ENCODE measurements at regions of chr7 and their contacts with region 1.

Region 1: GRCh38 chr7:25069900-25070443 is 55.1 kb downstream of the CYCS start:
- DNase-seq: peak; percentile 43 to 57 (median 54)
- H3K4me3 ChIP-seq: no peak overlapping the region
- H3K4me3 Mint-ChIP-seq: no peak overlapping the region
- H3K27ac ChIP-seq: no peak overlapping the region
- H3K27ac Mint-ChIP-seq: peak overlapping the region in 2 of 7 donors; percentile 44 to 51
- H3K4me1 ChIP-seq: peaks cover 5% of the 10 kb centered on the region
- H3K4me1 Mint-ChIP-seq: peaks cover 0 to 7% (median 4%) of the 10 kb centered on the region in 4 donors
- H3K27me3 ChIP-seq: no peaks in the 10 kb centered on the region
- H3K27me3 Mint-ChIP-seq: no peaks in the 10 kb centered on the region

Region 2: DNA sequence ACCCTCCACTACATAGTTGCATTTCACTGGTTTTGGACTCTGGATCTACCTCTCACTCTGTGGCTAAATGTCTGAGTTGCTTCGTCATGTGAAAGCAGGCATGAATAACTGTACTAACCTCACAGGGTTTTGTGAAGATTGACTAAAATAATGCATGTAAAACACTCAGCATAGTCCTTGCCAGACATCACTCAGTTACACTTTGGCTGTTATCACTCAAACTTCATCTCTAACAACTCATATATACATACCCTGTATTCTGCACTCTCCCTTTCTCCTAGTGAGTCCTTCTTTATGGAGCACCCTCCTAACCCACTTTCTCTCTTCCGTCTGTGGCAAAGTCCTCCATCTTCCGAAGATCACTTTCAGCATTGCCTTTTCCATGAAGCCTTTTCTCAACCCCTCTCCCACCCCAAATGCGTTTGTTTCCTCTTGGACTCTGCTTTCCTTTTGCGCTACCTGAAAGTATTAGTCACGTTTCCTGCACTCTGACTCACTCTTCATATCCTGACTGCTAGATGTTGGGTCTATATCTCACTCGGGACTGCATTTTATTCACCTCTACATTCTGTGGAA is 162.6 kb before region 1 on chr7:
- CTCF ChIA-PET with region 1: interaction called, 5 read pairs
- POLR2A ChIA-PET with region 1: interaction called, 3 read pairs
- intact Hi-C with region 1: loop called (anchors 5 kb)
- DNase-seq: peak; percentile 16 to 76 (median 29)
- H3K4me3 ChIP-seq: peak overlapping the region; percentile 14 to 23
- H3K4me3 Mint-ChIP-seq: no peak overlapping the region
- H3K27ac ChIP-seq: peak overlapping the region; percentile 6
- H3K27ac Mint-ChIP-seq: no peak overlapping the region
- H3K4me1 ChIP-seq: peaks cover 88% of the 10 kb centered on the region
- H3K4me1 Mint-ChIP-seq: peaks cover 35 to 42% (median 38%) of the 10 kb centered on the region in 4 donors
- H3K27me3 ChIP-seq: no peaks in the 10 kb centered on the region
- H3K27me3 Mint-ChIP-seq: no peaks in the 10 kb centered on the region

Region 3: DNA sequence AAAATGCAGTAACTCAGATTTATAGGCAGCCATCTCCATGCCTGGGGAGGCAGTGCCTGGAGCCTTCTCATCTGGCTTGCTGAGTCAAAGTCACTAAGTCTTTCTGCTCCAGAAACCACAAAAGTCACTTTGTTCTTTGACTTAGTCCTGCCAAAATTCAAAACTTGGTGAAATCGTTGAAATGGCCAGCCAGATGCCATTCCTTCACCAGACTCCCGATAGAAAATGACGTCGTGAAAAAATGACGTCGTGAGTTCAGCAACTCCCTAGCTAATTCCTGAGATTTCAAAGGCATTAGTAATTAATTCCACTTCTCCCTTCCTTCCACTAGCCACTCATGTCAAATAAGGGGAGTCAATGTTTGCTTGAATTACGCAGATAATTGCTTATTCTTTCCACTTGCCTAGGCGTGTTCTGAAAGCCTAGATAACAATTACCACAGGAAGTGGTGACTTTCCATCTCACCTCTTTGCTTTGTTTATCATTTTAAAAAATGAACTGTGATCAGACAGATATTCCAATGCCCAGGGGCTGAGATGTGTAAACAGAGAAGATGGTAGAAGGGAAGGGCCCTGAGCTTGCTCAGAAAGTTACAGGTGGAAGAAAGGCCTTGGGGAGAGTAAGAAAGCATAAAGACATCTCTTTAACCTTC is 41.5 kb before region 1 on chr7:
- CTCF ChIA-PET with region 1: interaction called, 36 read pairs
- POLR2A ChIA-PET with region 1: interaction called, 11 read pairs
- intact Hi-C with region 1: loop called (anchors 1 kb)
- DNase-seq: peak; percentile 54 to 78 (median 71)
- H3K4me3 ChIP-seq: no peak overlapping the region
- H3K4me3 Mint-ChIP-seq: peak overlapping the region in 7 of 8 donors; percentile 61 to 92 (median 78)
- H3K27ac ChIP-seq: peak overlapping the region; percentile 53
- H3K27ac Mint-ChIP-seq: peak overlapping the region; percentile 67 to 97 (median 94)
- H3K4me1 ChIP-seq: peaks cover 55% of the 10 kb centered on the region
- H3K4me1 Mint-ChIP-seq: peaks cover 25 to 78% (median 62%) of the 10 kb centered on the region in 4 donors
- H3K27me3 ChIP-seq: no peaks in the 10 kb centered on the region
- H3K27me3 Mint-ChIP-seq: peaks cover 0 to 1% of the 10 kb centered on the region in 2 donors

Region 4: GRCh38 chr7:25050223-25050622 is 19.7 kb before region 1 on chr7:
- CTCF ChIA-PET with region 1: interaction called, 10 read pairs
- POLR2A ChIA-PET with region 1: no interaction called
- intact Hi-C with region 1: no loop called
- DNase-seq: no peak
- H3K4me3 ChIP-seq: no peak overlapping the region
- H3K4me3 Mint-ChIP-seq: no peak overlapping the region
- H3K27ac ChIP-seq: no peak overlapping the region
- H3K27ac Mint-ChIP-seq: no peak overlapping the region
- H3K4me1 ChIP-seq: no peaks in the 10 kb centered on the region
- H3K4me1 Mint-ChIP-seq: no peaks in the 10 kb centered on the region
- H3K27me3 ChIP-seq: no peaks in the 10 kb centered on the region
- H3K27me3 Mint-ChIP-seq: no peaks in the 10 kb centered on the region

Region 5: DNA sequence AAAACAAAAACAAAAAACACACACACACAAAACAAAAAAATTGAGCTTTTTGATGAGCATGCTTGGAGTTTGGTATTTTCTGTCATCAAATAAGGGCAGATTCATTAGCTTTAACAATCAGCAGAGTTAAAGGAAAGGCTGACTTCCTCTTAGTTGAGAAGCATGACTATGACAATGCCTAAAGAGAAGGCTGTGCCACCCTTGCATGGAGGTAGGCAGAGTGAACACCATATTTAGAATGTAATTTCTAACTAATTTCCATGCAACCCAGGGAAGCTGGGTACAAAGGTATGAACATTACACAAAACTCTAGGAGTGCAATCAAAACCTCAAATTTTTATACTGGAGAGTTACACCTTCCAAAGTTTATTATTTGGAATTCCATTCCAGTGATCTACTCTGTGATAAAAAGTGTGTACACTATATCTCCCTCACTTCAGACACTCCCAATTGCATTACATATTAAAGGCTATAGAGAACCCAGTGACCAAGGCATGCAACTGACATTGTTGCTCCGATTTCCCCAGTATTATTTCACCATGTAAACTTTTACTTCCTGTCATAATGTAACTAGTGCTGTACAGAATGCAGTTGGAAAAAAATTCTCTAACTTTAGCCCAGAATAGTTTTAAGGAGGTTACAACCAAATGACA is 64.5 kb after region 1 on chr7:
- CTCF ChIA-PET with region 1: no interaction called
- POLR2A ChIA-PET with region 1: no interaction called
- intact Hi-C with region 1: no loop called
- DNase-seq: no peak
- H3K4me3 ChIP-seq: no peak overlapping the region
- H3K4me3 Mint-ChIP-seq: no peak overlapping the region
- H3K27ac ChIP-seq: no peak overlapping the region
- H3K27ac Mint-ChIP-seq: no peak overlapping the region
- H3K4me1 ChIP-seq: peaks cover 8% of the 10 kb centered on the region
- H3K4me1 Mint-ChIP-seq: peaks cover 8 to 16% (median 11%) of the 10 kb centered on the region in 4 donors
- H3K27me3 ChIP-seq: no peaks in the 10 kb centered on the region
- H3K27me3 Mint-ChIP-seq: no peaks in the 10 kb centered on the region